Activated B cell treated with CpG ODN at 0.5 μM for 24 hours (primary cell): ENCODE measurements at regions of chr20 and their contacts with region 1.

Region 1: DNA sequence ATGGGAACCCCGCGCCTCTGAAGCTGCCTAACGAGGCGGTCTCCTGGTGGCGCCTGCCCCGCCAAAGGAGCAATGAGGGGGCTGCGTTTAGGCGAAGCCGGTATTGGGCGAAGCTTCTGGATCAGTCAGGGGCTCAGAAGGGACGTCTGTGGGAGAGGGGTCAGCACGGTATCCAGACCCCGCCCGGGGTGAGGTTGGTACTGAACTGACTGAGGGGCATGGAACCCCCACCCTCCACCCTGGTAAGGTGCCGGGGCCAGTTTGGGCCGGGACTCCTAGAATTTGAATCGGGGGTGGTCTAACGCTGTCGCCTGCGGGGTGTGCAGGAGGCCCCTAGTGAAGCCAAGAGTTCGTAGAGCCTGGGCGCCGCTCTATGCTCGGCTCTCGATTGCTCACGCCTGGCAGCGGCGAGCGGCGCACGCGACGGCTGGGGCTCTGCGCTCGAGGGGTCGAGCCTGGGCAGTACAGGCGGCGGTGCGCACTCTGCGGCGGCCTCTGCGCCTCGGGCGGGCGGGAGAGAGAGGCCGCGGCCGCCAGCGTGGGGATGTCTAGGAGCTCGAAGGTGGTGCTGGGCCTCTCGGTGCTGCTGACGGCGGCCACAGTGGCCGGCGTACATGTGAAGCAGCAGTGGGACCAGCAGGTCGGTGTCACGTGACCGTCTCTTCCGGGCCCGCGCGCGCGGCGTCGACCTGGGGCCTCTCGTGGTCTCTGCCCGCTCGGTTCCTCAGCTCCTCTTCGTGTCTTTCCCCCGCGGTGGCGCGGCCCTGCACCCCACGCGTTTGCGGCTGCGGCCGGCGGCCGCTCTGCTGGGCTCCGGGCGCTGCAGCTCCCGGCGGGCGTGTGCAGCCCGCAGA is at the starts of genes KAT14 and PET117:
- DNase-seq: peak; percentile 96
- ATAC-seq: peak; percentile 91
- H3K4me3 Mint-ChIP-seq: peak within 1 kb of the TSS; percentile 90
- H3K27ac Mint-ChIP-seq: peak within 1 kb of the TSS; percentile 87
- H3K4me1 Mint-ChIP-seq: peaks cover 23% of the 10 kb centered on the region
- H3K27me3 Mint-ChIP-seq: no peaks in the 10 kb centered on the region
- CTCF ChIP-seq: no peak
- total RNA-seq, gene KAT14: 14.9 and 15.6 TPM in 2 replicates
- total RNA-seq, gene PET117: 10.1 and 13.6 TPM in 2 replicates

Region 2: GRCh38 chr20:16573001-16573965 is 1564.4 kb before region 1 on chr20 and contains the start of gene KIF16B:
- CTCF ChIA-PET with region 1: no interaction called
- POLR2A ChIA-PET with region 1: no interaction called
- intact Hi-C with region 1: loop called (anchors 2 kb)
- DNase-seq: peak; percentile 93
- ATAC-seq: peak; percentile 90
- H3K4me3 Mint-ChIP-seq: peak within 1 kb of the TSS; percentile 94
- H3K27ac Mint-ChIP-seq: peak within 1 kb of the TSS; percentile 69
- H3K4me1 Mint-ChIP-seq: peaks cover 42% of the 10 kb centered on the region
- H3K27me3 Mint-ChIP-seq: no peaks in the 10 kb centered on the region
- CTCF ChIP-seq: no peak
- total RNA-seq, gene KIF16B: 7.2 and 9.1 TPM in 2 replicates

Region 3: GRCh38 chr20:17904027-17904426 is 233.6 kb before region 1 on chr20:
- CTCF ChIA-PET with region 1: no interaction called
- POLR2A ChIA-PET with region 1: no interaction called
- intact Hi-C with region 1: loop called (anchors 5 kb)
- DNase-seq: no peak
- ATAC-seq: peak; percentile 67
- H3K4me3 Mint-ChIP-seq: no peak overlapping the region
- H3K27ac Mint-ChIP-seq: no peak overlapping the region
- H3K4me1 Mint-ChIP-seq: peaks cover 36% of the 10 kb centered on the region
- H3K27me3 Mint-ChIP-seq: peaks cover 10% of the 10 kb centered on the region
- CTCF ChIP-seq: no peak

Region 4: DNA sequence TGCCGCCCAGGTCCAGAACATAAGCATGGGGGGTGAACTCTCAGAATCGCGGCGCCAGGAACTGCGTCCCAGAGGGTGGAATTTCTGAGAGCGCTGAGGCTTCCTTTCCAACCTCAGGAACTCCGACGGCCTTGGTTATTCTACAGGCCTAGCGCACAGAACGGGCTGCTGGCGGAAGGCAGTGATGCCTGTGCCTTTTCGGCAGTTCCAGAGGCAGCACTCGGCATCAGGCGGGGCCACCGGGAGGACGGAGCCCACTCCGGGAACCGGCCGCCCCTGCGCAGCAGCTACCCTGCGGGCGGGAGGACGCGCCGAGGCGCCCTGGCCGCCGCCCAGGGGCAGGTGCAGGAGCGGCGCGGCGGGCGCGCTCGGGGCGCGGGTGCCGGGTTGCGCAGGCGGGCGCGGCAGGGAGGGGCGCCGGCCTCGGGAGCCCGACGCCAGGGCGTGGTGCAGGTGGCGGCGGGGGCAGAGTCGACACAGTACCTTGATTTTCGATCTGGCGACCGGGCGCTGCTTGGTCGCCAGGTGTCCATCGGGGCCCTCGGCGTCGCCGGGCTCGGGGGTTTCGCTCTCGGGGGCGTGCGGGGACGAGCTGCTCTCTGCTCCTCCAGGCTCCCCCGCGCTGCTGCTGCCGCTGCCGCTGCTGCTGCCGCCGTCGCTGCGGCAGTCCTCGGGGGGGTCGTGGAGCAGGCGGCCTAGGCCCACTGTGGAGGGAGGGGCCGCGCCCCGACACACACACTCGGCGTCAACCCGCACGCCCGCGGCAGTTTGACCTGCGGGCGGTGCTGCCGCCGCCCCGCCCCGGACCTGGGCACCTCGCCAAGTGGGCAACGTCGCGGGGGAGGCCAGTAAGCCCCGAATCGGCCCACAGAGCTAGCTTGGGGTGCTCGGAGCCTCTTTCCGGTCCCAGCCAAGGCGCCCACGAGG is 81.2 kb before region 1 on chr20:
- CTCF ChIA-PET with region 1: no interaction called
- POLR2A ChIA-PET with region 1: interaction called, 10 read pairs
- intact Hi-C with region 1: no loop called
- DNase-seq: peak; percentile 20
- ATAC-seq: no peak
- H3K4me3 Mint-ChIP-seq: peak overlapping the region; percentile 74
- H3K27ac Mint-ChIP-seq: no peak overlapping the region
- H3K4me1 Mint-ChIP-seq: peaks cover 14% of the 10 kb centered on the region
- H3K27me3 Mint-ChIP-seq: peaks cover 59% of the 10 kb centered on the region
- CTCF ChIP-seq: no peak

Region 5: GRCh38 chr20:18252597-18253451 is 115.2 kb after region 1 on chr20:
- CTCF ChIA-PET with region 1: no interaction called
- POLR2A ChIA-PET with region 1: no interaction called
- intact Hi-C with region 1: no loop called
- DNase-seq: no peak
- ATAC-seq: no peak
- H3K4me3 Mint-ChIP-seq: no peak overlapping the region
- H3K27ac Mint-ChIP-seq: no peak overlapping the region
- H3K4me1 Mint-ChIP-seq: no peaks in the 10 kb centered on the region
- H3K27me3 Mint-ChIP-seq: no peaks in the 10 kb centered on the region
- CTCF ChIP-seq: no peak

Region 6: DNA sequence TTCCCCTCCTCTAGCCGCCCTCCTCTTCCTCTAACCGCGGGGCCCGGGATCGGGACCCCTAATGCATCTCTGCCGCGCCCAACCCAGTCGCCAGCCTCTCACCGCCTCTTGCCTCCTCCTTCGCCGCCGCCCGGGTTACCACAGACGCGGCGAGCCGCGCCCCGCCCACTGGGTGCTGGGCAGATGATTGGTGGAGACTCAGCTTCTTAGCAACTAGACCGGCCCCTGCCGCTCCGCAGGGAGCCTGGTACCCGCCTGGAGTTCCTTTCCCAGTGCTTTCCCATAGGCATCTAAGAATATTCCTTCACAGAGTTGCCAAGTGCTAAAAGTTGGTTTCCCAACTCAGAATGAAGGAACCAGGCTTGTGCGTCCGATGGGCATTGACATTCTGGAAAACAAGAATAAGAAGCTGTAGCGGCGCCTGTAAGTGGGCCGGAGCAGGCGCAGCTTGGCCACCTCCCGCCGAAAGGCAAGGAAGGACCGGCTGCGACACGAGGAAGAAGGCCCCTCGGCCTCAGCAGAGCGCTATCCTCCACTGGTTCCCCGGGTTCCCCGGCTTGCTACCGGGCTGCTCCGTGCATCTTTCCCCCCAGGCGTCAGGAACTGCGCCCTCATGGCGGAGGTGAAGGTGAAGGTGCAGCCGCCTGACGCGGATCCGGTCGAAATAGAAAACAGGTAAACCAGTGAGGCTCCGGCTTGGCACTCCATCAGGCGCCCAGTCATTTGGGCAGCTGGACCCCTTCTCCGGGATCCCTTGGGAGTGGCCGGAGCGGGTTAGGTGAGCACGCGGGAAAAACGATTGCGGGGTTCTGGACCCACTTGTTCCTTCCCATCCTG is 329.5 kb after region 1 on chr20 and contains the starts of genes DZANK1 and POLR3F:
- CTCF ChIA-PET with region 1: no interaction called
- POLR2A ChIA-PET with region 1: interaction called, 6 read pairs
- intact Hi-C with region 1: loop called (anchors 1 kb)
- DNase-seq: peak; percentile 88
- ATAC-seq: peak; percentile 96
- H3K4me3 Mint-ChIP-seq: peak within 1 kb of the TSS; percentile 99
- H3K27ac Mint-ChIP-seq: peak within 1 kb of the TSS; percentile 95
- H3K4me1 Mint-ChIP-seq: peaks cover 27% of the 10 kb centered on the region
- H3K27me3 Mint-ChIP-seq: no peaks in the 10 kb centered on the region
- CTCF ChIP-seq: no peak
- total RNA-seq, gene DZANK1: 5.3 and 6.0 TPM in 2 replicates
- total RNA-seq, gene POLR3F: 13.3 and 14.5 TPM in 2 replicates

Region 7: GRCh38 chr20:18587665-18588573 is 450.3 kb after region 1 on chr20 and contains the start of gene DTD1:
- CTCF ChIA-PET with region 1: no interaction called
- POLR2A ChIA-PET with region 1: no interaction called
- intact Hi-C with region 1: loop called (anchors 5 kb)
- DNase-seq: peak; percentile 88
- ATAC-seq: peak; percentile 95
- H3K4me3 Mint-ChIP-seq: peak within 1 kb of the TSS; percentile 93
- H3K27ac Mint-ChIP-seq: peak within 1 kb of the TSS; percentile 90
- H3K4me1 Mint-ChIP-seq: peaks cover 24% of the 10 kb centered on the region
- H3K27me3 Mint-ChIP-seq: peaks cover 9% of the 10 kb centered on the region
- CTCF ChIP-seq: no peak
- total RNA-seq, gene DTD1: 26.3 and 27.5 TPM in 2 replicates